ENCODE measurements at regions of chr6 and their contacts with region 1.

Region 1: GRCh38 chr6:152484806-152485205 is 152.4 kb downstream of the SYNE1 start:
- DNase-seq: no peak
- CTCF ChIP-seq: no peak

Region 2: GRCh38 chr6:152248980-152249379 is 235.8 kb before region 1 on chr6:
- CTCF ChIA-PET with region 1: no interaction called
- POLR2A ChIA-PET with region 1: no interaction called
- DNase-seq: no peak
- CTCF ChIP-seq: no peak

Region 3: GRCh38 chr6:152471456-152472265 is 13.1 kb before region 1 on chr6:
- CTCF ChIA-PET with region 1: interaction called, 20 read pairs
- POLR2A ChIA-PET with region 1: no interaction called
- DNase-seq: no peak
- CTCF ChIP-seq: no peak